GM12878 (cell line): ENCODE measurements at regions of chr12 and their contacts with region 1.

Region 1: DNA sequence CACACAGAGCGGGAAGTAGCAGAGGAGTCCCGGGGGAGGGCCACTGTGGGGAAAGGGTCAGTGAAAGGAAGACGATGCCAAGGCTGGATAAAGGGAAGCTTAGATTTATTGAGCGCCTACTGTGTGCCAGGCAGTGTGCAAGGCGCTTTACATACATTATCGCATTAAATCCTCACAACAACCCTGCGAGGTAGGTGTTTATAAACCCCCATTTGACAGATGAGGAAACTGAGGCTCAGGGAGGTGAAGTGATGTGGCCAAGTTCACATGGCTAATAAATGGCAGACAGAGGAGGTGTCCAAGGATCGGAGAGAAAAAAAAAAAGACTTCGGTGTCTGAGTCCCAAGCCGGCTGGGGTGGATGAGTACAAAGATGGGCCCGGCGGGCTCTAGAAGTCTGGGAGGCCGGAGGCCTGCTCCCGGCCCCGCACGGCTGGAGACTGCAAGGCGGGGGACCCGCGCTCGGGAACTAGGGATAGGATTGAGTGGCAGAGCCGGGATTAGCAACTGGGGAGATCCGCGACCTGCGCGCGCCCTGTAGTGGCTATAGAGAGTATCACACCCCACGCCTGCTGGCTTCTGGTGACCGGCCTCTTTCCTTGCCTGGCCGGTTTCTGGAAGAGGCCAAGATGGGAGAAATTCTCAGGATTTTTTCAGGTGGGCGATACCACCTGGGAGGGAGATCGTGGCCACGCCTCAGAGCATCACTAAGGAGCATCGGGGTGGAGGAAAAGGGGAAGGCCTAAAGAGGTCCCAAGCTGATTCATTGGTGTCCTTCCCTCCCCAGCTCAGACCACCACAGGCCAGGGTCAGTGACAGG is 3.9 kb downstream of the DDN start:
- DNase-seq: no peak
- ATAC-seq: peak; percentile 31
- H3K4me3 ChIP-seq: no peak overlapping the region
- H3K27ac ChIP-seq: no peak overlapping the region
- H3K4me1 ChIP-seq: peaks cover 29% of the 10 kb centered on the region
- H3K27me3 ChIP-seq: no peaks in the 10 kb centered on the region; a peak in 1 of 4 replicates
- CTCF ChIP-seq: peak; percentile 68 to 84 (median 82)
- EP300 ChIP-seq: no peak
- POLR2A ChIP-seq: no peak
- RAD21 ChIP-seq: peak; percentile 62

Region 2: GRCh38 chr12:48631057-48631456 is 364.2 kb before region 1 on chr12:
- CTCF ChIA-PET with region 1: no interaction called
- POLR2A ChIA-PET with region 1: no interaction called
- RAD21 ChIA-PET with region 1: no interaction called
- SMC1A ChIA-PET with region 1: no interaction called
- in situ Hi-C with region 1: no loop called
- intact Hi-C with region 1: no loop called
- DNase-seq: no peak
- ATAC-seq: no peak
- H3K4me3 ChIP-seq: no peak overlapping the region
- H3K27ac ChIP-seq: no peak overlapping the region
- H3K4me1 ChIP-seq: no peaks in the 10 kb centered on the region
- H3K27me3 ChIP-seq: no peaks in the 10 kb centered on the region
- CTCF ChIP-seq: no peak
- EP300 ChIP-seq: no peak
- POLR2A ChIP-seq: no peak
- RAD21 ChIP-seq: no peak

Region 3: GRCh38 chr12:48924617-48925303 is 70.5 kb before region 1 on chr12:
- CTCF ChIA-PET with region 1: interaction called, 17 read pairs
- POLR2A ChIA-PET with region 1: interaction called, 3 read pairs
- RAD21 ChIA-PET with region 1: interaction called, 9 read pairs
- SMC1A ChIA-PET with region 1: interaction called, 7 read pairs
- in situ Hi-C with region 1: no loop called
- intact Hi-C with region 1: no loop called
- DNase-seq: peak; percentile 40
- ATAC-seq: peak; percentile 92
- H3K4me3 ChIP-seq: peak overlapping the region; percentile 98
- H3K27ac ChIP-seq: peak overlapping the region; percentile 90
- H3K4me1 ChIP-seq: peaks cover 22% of the 10 kb centered on the region
- H3K27me3 ChIP-seq: no peaks in the 10 kb centered on the region
- CTCF ChIP-seq: peak; percentile 88 to 95 (median 93)
- EP300 ChIP-seq: no peak
- POLR2A ChIP-seq: no peak
- RAD21 ChIP-seq: peak; percentile 88

Region 4: GRCh38 chr12:49018261-49019119 is 23.2 kb after region 1 on chr12 and contains the start of gene PRKAG1:
- CTCF ChIA-PET with region 1: interaction called, 172 read pairs
- POLR2A ChIA-PET with region 1: interaction called, 52 read pairs
- RAD21 ChIA-PET with region 1: interaction called, 62 read pairs
- SMC1A ChIA-PET with region 1: interaction called, 47 read pairs
- in situ Hi-C with region 1: no loop called
- intact Hi-C with region 1: loop called (anchors 1 kb)
- DNase-seq: peak; percentile 77
- ATAC-seq: peak; percentile 90
- H3K4me3 ChIP-seq: peak within 1 kb of the TSS; percentile 93
- H3K27ac ChIP-seq: peak within 1 kb of the TSS; percentile 93
- H3K4me1 ChIP-seq: 0 out of 2 replicates have a peak, but pooled peaks cover 3% of the 10 kb centered on the region
- H3K27me3 ChIP-seq: no peaks in the 10 kb centered on the region
- CTCF ChIP-seq: peak; percentile 57 to 71 (median 68)
- EP300 ChIP-seq: no peak
- POLR2A ChIP-seq: peak; percentile 90
- RAD21 ChIP-seq: peak; percentile 36; the same call in 1 of the 2 replicates
- polyA plus RNA-seq, gene PRKAG1: 61.5 to 70.9 TPM

Region 5: DNA sequence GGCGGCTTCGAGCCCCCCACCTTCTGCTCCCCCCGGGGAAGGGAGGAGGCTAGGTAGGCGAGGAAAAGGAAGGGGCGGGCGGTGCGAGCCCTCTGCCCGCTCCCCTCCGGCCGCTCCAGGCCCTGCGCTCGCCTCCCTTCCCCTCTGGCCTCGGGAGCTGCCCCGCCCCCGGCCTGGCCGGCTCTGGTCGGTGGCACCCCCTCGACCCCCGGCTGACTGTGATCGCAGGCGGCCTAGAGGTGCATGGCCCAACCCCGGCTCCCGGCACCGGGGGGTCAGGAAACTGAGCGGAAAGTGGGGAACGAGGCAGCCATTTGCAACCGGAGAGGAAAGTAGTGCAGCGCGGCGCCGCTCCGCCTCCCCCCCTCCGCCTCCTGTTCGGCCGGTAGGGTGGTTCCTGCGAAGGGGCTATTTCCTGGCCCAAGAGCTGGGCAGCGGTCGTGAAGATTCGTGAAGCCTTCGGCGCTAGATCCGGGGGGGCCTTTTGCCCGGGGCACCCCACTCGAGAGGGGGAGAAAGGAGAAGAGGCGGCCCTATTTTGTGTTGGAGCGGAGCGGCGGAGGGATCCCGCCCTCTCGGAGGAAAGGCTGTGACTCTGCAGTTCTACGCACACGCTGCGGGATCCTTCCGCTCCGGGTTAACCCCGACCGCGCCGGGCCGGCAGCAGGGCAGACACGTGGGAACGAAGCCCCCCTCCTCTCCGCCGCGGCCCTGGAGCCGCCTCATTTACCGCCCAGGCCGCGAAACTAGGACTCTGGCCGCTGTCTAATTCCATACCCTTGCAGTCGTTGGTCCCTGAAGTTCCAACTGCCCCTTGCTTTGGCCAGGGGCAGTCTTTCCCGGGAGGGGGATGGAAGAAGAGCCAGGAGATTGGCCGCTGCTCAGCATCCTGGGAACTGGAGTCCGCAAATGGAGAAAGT is 65.2 kb after region 1 on chr12 and contains the start of gene KMT2D:
- CTCF ChIA-PET with region 1: interaction called, 26 read pairs
- POLR2A ChIA-PET with region 1: interaction called, 3 read pairs
- RAD21 ChIA-PET with region 1: interaction called, 10 read pairs
- SMC1A ChIA-PET with region 1: interaction called, 5 read pairs
- in situ Hi-C with region 1: no loop called
- intact Hi-C with region 1: no loop called
- DNase-seq: peak; percentile 59
- ATAC-seq: peak; percentile 78
- H3K4me3 ChIP-seq: peak within 1 kb of the TSS; percentile 99
- H3K27ac ChIP-seq: peak within 1 kb of the TSS; percentile 99
- H3K4me1 ChIP-seq: peaks cover 6% of the 10 kb centered on the region
- H3K27me3 ChIP-seq: no peaks in the 10 kb centered on the region
- CTCF ChIP-seq: peak in 1 of 3 experiments; percentile 28; a peak in 1 of 6 replicates
- EP300 ChIP-seq: peak in 1 of 2 experiments; percentile 66; a peak in 1 of 4 replicates
- POLR2A ChIP-seq: peak; percentile 80
- RAD21 ChIP-seq: no peak
- polyA plus RNA-seq, gene KMT2D: 0.51 to 1.2 TPM

Region 6: DNA sequence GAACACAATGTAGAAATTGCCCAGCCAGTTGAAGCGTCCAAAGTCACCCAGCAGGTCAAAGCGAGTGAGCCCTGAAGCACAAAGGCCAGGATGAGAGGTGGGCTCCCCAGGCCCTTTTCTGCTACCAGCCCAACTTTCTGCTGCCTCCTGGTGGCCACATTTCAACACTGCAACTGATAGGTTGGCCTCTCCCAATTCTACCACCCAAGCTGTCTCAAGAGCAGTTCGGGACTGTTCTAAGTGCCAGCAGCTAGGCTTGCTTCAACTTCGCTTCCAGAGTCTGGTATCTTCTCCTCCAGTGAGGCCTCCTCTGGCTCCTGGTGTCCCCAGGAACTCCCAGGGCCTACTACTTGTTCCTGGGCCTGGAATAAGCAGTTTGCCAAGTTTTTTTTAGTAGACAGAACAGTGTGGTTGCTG is 102.8 kb after region 1 on chr12:
- CTCF ChIA-PET with region 1: interaction called, 58 read pairs
- POLR2A ChIA-PET with region 1: interaction called, 3 read pairs
- RAD21 ChIA-PET with region 1: interaction called, 11 read pairs
- SMC1A ChIA-PET with region 1: interaction called, 6 read pairs
- in situ Hi-C with region 1: no loop called
- intact Hi-C with region 1: loop called (anchors 5 kb)
- DNase-seq: no peak
- ATAC-seq: peak; percentile 80
- H3K4me3 ChIP-seq: no peak overlapping the region
- H3K27ac ChIP-seq: no peak overlapping the region
- H3K4me1 ChIP-seq: no peaks in the 10 kb centered on the region
- H3K27me3 ChIP-seq: peaks cover 6 to 10% of the 10 kb centered on the region in 2 experiments
- CTCF ChIP-seq: peak; percentile 76 to 89 (median 84)
- EP300 ChIP-seq: no peak
- POLR2A ChIP-seq: no peak
- RAD21 ChIP-seq: peak; percentile 55

Region 7: DNA sequence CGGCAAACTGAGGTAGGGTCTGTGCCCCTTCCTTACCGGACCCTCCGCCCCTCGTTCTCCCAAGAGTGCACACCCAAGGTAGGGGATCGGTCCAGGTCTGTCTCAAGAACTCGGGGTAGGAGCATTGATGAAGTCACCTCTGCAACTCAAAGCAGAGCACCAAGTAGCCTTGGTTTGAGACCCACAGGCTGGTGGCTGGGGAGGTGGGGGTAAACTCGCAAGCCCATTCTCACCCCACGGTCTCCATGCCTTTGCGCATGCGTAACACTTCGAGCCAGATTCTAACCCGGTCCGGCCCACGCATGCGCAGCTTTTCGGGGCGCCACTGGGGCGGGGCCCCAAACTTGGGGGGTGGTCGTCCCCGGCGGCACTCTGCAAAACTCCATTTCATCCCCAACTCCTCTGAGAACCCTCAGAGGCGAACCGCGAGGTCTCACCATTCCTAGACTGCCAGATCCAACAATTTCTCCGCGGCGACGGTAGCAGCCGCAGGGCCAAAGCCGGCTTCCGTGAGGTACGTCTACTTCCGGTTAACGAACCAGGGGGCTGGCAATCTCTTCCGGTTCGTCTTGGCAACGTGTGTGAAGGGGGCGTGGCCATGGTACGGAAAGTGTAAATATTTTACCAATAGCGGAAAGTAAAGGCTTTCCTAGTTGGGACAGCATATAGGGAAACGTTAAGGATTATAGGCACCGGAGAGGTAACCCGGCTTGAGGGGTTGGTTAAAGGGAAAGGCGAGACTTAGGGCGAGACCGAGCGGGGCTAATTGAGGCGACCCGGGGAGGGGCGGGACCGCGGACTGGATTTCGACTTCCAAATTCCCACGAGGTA is 572.6 kb after region 1 on chr12 and contains the start of gene MCRS1:
- CTCF ChIA-PET with region 1: no interaction called
- POLR2A ChIA-PET with region 1: no interaction called
- RAD21 ChIA-PET with region 1: no interaction called
- SMC1A ChIA-PET with region 1: no interaction called
- in situ Hi-C with region 1: no loop called
- intact Hi-C with region 1: no loop called
- DNase-seq: peak; percentile 80
- ATAC-seq: peak; percentile 92
- H3K4me3 ChIP-seq: peak within 1 kb of the TSS; percentile 99
- H3K27ac ChIP-seq: peak within 1 kb of the TSS; percentile 91
- H3K4me1 ChIP-seq: peaks cover 8% of the 10 kb centered on the region
- H3K27me3 ChIP-seq: no peaks in the 10 kb centered on the region
- CTCF ChIP-seq: no peak
- EP300 ChIP-seq: no peak
- POLR2A ChIP-seq: peak; percentile 98
- RAD21 ChIP-seq: no peak
- polyA plus RNA-seq, gene MCRS1: 34.3 to 52.4 TPM